IMR-90 (cell line): ENCODE measurements at regions of chr1 and their contacts with region 1.

Region 1: GRCh38 chr1:168550976-168551375 is 7.2 kb upstream of the XCL2 start:
- DNase-seq: no peak
- ATAC-seq: no peak
- H3K4me3 ChIP-seq: no peak overlapping the region
- H3K27ac ChIP-seq: no peak overlapping the region
- H3K4me1 ChIP-seq: no peaks in the 10 kb centered on the region
- H3K27me3 ChIP-seq: no peaks in the 10 kb centered on the region
- CTCF ChIP-seq: no peak
- POLR2A ChIP-seq: no peak
- RAD21 ChIP-seq: no peak

Region 2: DNA sequence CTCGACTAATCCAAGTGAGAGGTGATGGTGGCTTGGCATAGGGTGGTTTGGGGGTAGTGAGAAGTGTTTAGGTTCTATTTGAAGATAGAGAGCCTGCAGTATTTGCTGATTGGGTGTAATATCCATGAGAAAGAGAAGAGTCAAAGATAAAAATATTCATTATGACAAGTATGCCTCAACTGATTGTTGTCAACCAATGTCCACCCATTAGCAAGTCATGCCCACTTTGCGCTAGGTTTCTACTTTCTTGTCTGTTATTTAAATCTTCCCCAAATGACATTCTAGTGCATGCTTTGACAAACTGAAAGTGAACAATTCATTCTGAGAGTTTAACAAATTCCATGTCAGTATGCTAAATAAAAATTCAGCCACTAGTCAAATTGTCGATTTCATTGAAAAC is 21.7 kb after region 1 on chr1:
- CTCF ChIA-PET with region 1: no interaction called
- POLR2A ChIA-PET with region 1: no interaction called
- dilution Hi-C with region 1: no loop called
- in situ Hi-C with region 1: no loop called
- intact Hi-C with region 1: loop called (anchors 1 kb)
- DNase-seq: no peak
- ATAC-seq: no peak
- H3K4me3 ChIP-seq: no peak overlapping the region
- H3K27ac ChIP-seq: no peak overlapping the region
- H3K4me1 ChIP-seq: no peaks in the 10 kb centered on the region
- H3K27me3 ChIP-seq: peaks cover 3% of the 10 kb centered on the region; the same call in 1 of the 2 replicates
- CTCF ChIP-seq: no peak
- POLR2A ChIP-seq: no peak
- RAD21 ChIP-seq: no peak

Region 3: DNA sequence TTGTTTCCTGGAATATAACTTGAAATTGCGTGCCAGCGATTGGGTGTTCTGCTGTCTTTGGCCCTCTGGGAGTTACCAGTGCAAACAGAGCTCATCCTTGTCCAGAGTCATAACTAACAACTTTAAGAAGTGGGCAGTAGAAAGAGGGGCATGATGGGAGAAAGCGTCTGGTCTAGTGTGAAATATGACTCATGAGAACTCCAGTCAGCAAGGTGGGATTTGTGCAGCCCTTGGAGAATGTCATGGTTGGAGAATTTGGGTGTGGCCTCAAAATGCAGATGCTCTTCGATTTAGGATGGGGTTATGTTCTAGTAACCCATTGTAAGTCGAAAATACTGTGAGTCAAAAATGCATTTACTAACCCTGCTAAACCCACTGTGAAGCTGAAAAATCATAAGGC is 568.4 kb after region 1 on chr1:
- CTCF ChIA-PET with region 1: no interaction called
- POLR2A ChIA-PET with region 1: no interaction called
- dilution Hi-C with region 1: no loop called
- in situ Hi-C with region 1: no loop called
- intact Hi-C with region 1: no loop called
- DNase-seq: peak; percentile 80
- ATAC-seq: peak; percentile 61
- H3K4me3 ChIP-seq: no peak overlapping the region
- H3K27ac ChIP-seq: peak overlapping the region; percentile 2; the same call in 1 of the 2 replicates
- H3K4me1 ChIP-seq: peaks cover 26% of the 10 kb centered on the region
- H3K27me3 ChIP-seq: no peaks in the 10 kb centered on the region
- CTCF ChIP-seq: no peak
- POLR2A ChIP-seq: peak; percentile 9; the same call in 1 of the 2 replicates
- RAD21 ChIP-seq: no peak